ENCODE measurements at regions of chr6 and their contacts with region 1.

Region 1: GRCh38 chr6:82283771-82284410 is 36.3 kb upstream of the IBTK start:
- DNase-seq: no peak
- ATAC-seq: no peak
- H3K4me3 Mint-ChIP-seq: no peak overlapping the region
- H3K27ac Mint-ChIP-seq: no peak overlapping the region
- H3K4me1 Mint-ChIP-seq: peaks cover 19% of the 10 kb centered on the region
- H3K27me3 Mint-ChIP-seq: no peaks in the 10 kb centered on the region
- CTCF ChIP-seq: no peak

Region 2: DNA sequence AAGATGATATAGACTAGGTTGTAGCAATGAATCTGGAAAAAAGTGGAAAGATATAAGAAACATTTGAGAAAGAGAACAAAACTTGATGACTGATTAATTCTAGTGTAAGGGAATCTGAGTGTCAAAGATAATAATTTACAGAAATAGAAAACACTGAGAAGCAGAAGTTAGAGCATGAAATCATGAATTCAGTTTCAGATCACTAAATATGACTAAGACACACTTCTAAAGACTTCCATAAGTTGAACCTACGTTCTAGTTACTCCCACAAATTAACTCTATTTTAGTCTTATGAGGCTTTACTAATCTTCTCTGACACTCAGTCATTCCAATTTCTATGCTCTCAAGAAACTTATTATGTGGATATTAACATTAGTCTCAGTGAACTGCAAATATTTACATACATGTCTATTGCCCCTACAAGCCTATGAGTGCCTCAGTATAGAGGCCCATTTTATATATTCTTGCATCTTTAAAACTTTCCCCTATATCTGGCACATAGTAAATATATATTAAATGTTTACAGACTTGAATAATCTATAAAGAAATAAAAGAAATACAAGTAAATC is 66.8 kb before region 1 on chr6:
- CTCF ChIA-PET with region 1: no interaction called
- POLR2A ChIA-PET with region 1: no interaction called
- intact Hi-C with region 1: no loop called
- DNase-seq: no peak
- ATAC-seq: no peak
- H3K4me3 Mint-ChIP-seq: no peak overlapping the region
- H3K27ac Mint-ChIP-seq: peak overlapping the region; percentile 26
- H3K4me1 Mint-ChIP-seq: peaks cover 6% of the 10 kb centered on the region
- H3K27me3 Mint-ChIP-seq: no peaks in the 10 kb centered on the region
- CTCF ChIP-seq: no peak

Region 3: DNA sequence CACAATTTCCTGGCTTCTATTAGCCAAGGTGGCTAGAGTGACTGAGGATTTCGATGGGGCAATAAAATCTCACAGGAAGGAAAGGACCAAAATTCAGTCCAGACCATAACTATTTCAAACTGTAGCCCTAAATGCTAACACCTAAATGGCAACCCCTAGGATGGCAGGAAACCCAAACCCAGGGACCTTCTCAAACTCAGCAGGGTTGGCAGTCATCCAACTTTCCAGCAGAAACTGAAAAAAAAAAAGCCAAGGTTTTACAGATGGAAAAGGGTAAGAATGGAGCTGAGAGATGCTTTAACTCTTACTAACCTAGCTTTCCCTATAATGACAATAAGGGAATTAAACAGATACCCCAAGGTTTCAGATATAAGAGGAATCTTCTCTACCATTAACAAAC is 46.9 kb before region 1 on chr6:
- CTCF ChIA-PET with region 1: no interaction called
- POLR2A ChIA-PET with region 1: no interaction called
- intact Hi-C with region 1: no loop called
- DNase-seq: no peak
- ATAC-seq: no peak
- H3K4me3 Mint-ChIP-seq: no peak overlapping the region
- H3K27ac Mint-ChIP-seq: no peak overlapping the region
- H3K4me1 Mint-ChIP-seq: peaks cover 28% of the 10 kb centered on the region
- H3K27me3 Mint-ChIP-seq: no peaks in the 10 kb centered on the region
- CTCF ChIP-seq: no peak

Region 4: DNA sequence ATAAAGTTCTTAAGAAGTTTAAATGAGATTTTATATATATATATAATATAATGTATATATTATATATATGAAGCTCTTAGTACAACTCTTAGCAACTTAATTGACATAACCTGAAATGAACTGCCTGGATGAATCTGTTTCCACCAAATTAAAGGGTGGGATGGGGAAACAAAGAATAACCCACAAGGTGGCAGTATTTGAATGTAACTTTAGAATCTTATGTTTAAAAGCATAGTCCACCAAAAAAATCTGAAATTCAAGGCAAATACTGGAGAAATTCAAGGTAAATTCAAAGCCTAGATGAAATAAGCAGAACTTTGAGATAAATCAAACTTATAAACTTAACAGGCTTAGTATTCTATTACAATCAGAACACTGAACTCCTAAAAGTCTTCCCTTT is 31.9 kb before region 1 on chr6:
- CTCF ChIA-PET with region 1: no interaction called
- POLR2A ChIA-PET with region 1: no interaction called
- intact Hi-C with region 1: no loop called
- DNase-seq: no peak
- ATAC-seq: no peak
- H3K4me3 Mint-ChIP-seq: no peak overlapping the region
- H3K27ac Mint-ChIP-seq: no peak overlapping the region
- H3K4me1 Mint-ChIP-seq: peaks cover 5% of the 10 kb centered on the region
- H3K27me3 Mint-ChIP-seq: no peaks in the 10 kb centered on the region
- CTCF ChIP-seq: peak; percentile 39

Region 5: DNA sequence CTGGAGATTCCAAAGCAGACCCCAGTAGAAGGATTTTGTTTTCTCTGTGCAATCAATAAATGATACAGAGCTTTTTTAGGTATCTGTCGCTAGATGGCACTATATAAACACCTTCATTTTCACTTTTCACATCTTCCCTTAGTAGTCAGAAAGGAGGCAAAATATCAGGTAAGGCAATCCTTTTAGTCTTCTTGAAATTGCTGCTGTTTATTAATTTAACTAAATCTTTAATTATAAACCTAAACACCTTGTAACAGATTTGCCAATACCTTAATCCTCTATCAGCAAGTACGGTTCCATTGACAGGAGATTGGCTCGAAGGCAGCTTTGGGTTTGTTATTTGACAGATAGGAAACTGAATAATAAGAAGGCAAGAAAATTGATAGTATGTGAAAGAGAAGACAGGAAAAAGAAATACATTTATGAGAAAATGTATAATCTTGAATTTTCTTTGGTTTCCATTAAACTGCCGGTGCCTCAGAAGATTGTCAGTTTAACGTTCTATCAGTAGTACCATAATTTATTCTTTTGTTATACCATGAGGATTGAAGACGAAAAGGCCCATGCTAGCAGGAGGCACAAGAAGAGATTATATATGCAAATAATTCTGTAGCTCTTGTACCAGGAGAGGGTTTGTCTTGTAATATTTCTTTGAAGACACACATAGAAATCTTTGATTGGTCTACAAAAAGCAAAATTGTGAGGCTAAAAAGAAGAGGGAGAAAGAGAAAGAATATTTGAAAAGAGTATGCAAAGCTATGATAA is 12.8 kb before region 1 on chr6:
- CTCF ChIA-PET with region 1: interaction called, 10 read pairs
- POLR2A ChIA-PET with region 1: no interaction called
- intact Hi-C with region 1: no loop called
- DNase-seq: no peak
- ATAC-seq: peak; percentile 34
- H3K4me3 Mint-ChIP-seq: no peak overlapping the region
- H3K27ac Mint-ChIP-seq: no peak overlapping the region
- H3K4me1 Mint-ChIP-seq: no peaks in the 10 kb centered on the region
- H3K27me3 Mint-ChIP-seq: no peaks in the 10 kb centered on the region
- CTCF ChIP-seq: peak; percentile 73

Region 6: DNA sequence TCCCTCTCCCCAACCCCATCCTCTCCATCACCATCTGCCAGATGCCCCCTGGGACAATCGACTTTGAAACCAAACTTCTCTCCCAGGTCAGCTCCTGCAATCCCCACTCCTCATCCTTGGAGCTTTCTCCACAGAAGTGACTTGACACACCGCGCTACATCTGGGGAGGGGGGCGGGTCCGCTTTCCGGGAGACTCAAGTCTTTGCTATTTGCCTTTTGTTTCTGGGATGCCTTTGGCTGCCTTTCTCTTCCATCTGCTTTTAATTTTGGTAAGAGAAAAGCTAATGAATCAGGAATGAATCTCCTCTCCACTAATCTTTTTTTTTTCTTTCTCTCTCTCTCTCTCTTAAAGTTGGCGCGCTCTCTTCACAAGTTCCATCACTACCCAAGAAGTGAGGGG is 79.0 kb after region 1 on chr6:
- CTCF ChIA-PET with region 1: no interaction called
- POLR2A ChIA-PET with region 1: no interaction called
- intact Hi-C with region 1: no loop called
- DNase-seq: no peak
- ATAC-seq: no peak
- H3K4me3 Mint-ChIP-seq: no peak overlapping the region
- H3K27ac Mint-ChIP-seq: no peak overlapping the region
- H3K4me1 Mint-ChIP-seq: peaks cover 18% of the 10 kb centered on the region
- H3K27me3 Mint-ChIP-seq: peaks cover 47% of the 10 kb centered on the region
- CTCF ChIP-seq: no peak